Endothelial cell of umbilical vein (primary cell): ENCODE measurements at regions of chr7 and their contacts with region 1.

Region 1: DNA sequence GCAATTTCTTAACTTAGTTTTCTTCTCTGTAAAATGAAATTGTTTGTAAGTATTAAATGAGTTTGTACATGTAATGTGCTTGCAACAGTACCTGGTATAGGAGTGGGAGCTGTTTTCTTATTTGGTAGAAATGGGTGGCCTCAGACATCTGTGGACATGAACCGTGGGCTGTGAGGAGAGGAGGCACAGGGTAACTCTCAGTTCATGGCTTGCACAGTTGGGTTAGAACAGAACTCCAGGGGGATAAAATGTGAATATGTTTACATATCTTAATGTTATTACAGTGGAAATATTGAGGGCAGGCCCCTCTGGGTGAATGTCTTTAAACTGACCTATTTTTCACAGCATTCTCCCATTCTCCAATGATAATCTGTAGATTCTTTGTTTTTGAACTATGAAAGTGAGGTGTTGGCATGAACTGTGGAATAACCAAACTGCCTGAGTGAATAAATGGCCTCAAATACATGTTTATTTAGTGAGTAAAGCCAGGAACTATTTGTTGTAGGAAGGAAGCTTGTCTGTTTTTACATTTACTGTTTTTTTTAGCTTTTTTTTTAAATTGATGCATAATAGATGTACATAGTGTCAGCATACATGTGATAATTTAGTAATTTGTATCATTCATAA is 2.6 kb downstream of the ABCA13 start:
- DNase-seq: peak; percentile 91
- H3K4me3 ChIP-seq: peak overlapping the region in 1 of 3 experiments; percentile 24
- H3K27ac ChIP-seq: peak overlapping the region; percentile 91
- H3K4me1 ChIP-seq: peaks cover 20% of the 10 kb centered on the region
- H3K27me3 ChIP-seq: no peaks in the 10 kb centered on the region
- CTCF ChIP-seq: no peak
- POLR2A ChIP-seq: no peak

Region 2: GRCh38 chr7:48251766-48252165 is 77.9 kb after region 1 on chr7:
- CTCF ChIA-PET with region 1: no interaction called
- POLR2A ChIA-PET with region 1: no interaction called
- dilution Hi-C with region 1: no loop called
- intact Hi-C with region 1: loop called (anchors 1 kb)
- DNase-seq: no peak
- H3K4me3 ChIP-seq: no peak overlapping the region
- H3K27ac ChIP-seq: no peak overlapping the region
- H3K4me1 ChIP-seq: peaks cover 29% of the 10 kb centered on the region
- H3K27me3 ChIP-seq: no peaks in the 10 kb centered on the region
- CTCF ChIP-seq: no peak
- POLR2A ChIP-seq: no peak